Endothelial cell of umbilical vein (primary cell): ENCODE measurements at regions of chr13 and their contacts with region 1.

Region 1: GRCh38 chr13:43368003-43368402 is 344.6 kb downstream of the DNAJC15 start:
- DNase-seq: peak; percentile 37
- H3K4me3 ChIP-seq: no peak overlapping the region
- H3K27ac ChIP-seq: no peak overlapping the region
- H3K4me1 ChIP-seq: peaks cover 21% of the 10 kb centered on the region
- H3K27me3 ChIP-seq: no peaks in the 10 kb centered on the region
- CTCF ChIP-seq: no peak
- POLR2A ChIP-seq: no peak

Region 2: DNA sequence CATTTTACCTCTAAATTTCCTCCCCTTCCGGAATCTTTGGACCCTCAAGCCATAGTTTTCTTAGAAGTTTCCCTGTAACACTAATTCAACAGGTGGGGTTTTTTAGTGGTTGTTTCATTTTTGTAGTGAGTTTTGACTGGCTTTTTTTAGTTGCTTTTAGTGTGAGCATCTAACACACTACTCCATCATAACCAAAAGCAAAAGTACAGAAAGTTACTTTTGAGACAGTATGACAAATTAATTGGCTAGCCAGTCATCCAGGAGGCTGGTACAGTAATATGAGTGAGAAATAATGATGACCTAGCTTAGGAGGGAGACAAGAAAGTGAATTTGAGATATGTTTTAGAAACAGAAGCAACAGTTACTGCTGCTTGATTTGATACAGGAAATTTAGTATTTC is 273.1 kb before region 1 on chr13:
- CTCF ChIA-PET with region 1: no interaction called
- POLR2A ChIA-PET with region 1: no interaction called
- dilution Hi-C with region 1: no loop called
- intact Hi-C with region 1: loop called (anchors 10 kb)
- DNase-seq: no peak
- H3K4me3 ChIP-seq: no peak overlapping the region
- H3K27ac ChIP-seq: no peak overlapping the region
- H3K4me1 ChIP-seq: peaks cover 22% of the 10 kb centered on the region
- H3K27me3 ChIP-seq: no peaks in the 10 kb centered on the region
- CTCF ChIP-seq: no peak
- POLR2A ChIP-seq: no peak